CD8-positive, alpha-beta memory T cell (primary cell): ENCODE measurements at regions of chr6 and their contacts with region 1.

Region 1: DNA sequence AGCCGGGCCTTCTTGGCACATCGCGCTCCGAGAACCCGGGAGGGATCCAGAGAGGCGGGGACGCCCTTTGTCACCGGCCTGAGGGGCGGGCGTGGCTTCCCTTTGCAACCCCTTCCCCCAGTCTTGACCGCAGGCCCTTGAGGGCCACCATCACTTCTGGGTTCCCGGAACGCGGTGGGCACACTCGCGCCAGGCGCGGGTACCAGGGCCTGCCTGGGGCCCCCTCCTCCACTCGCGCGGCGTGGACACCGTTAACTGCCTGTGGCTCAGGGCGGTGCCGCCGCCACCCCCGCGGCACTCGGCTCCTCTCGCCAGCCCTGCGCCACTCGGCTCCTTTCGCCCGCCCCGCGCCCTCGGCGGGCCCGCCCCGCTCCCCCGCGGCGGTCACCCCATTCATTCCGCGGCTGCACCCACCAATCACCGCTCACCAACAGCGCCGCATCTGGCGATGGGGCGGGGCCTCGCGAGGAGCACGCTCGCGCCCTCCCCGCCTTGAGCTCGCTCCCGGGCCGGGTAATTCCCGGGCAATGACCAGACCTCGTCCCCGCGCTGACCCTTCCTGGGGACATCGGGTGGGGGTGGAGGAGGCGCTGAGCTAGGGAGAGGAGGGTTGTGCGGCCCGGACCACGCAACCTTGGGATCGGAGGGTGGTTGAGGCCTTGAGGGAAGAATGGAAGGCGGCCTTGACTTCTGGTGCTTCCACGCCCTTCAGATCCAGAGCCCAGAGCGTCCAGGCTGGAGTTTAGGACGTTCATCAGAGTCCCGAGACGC is 10.5 kb upstream of the ELOVL5 start:
- DNase-seq: peak; percentile 83 to 93 (median 88)
- H3K4me3 ChIP-seq: peak overlapping the region; percentile 75
- H3K4me3 Mint-ChIP-seq: peak overlapping the region; percentile 80 to 92 (median 90)
- H3K27ac ChIP-seq: peak overlapping the region; percentile 94
- H3K27ac Mint-ChIP-seq: peak overlapping the region; percentile 94 to 99 (median 98)
- H3K4me1 ChIP-seq: peaks cover 41% of the 10 kb centered on the region
- H3K4me1 Mint-ChIP-seq: peaks cover 40 to 51% (median 48%) of the 10 kb centered on the region in 3 donors
- H3K27me3 ChIP-seq: no peaks in the 10 kb centered on the region
- H3K27me3 Mint-ChIP-seq: peaks cover 0 to 1% of the 10 kb centered on the region in 2 donors

Region 2: DNA sequence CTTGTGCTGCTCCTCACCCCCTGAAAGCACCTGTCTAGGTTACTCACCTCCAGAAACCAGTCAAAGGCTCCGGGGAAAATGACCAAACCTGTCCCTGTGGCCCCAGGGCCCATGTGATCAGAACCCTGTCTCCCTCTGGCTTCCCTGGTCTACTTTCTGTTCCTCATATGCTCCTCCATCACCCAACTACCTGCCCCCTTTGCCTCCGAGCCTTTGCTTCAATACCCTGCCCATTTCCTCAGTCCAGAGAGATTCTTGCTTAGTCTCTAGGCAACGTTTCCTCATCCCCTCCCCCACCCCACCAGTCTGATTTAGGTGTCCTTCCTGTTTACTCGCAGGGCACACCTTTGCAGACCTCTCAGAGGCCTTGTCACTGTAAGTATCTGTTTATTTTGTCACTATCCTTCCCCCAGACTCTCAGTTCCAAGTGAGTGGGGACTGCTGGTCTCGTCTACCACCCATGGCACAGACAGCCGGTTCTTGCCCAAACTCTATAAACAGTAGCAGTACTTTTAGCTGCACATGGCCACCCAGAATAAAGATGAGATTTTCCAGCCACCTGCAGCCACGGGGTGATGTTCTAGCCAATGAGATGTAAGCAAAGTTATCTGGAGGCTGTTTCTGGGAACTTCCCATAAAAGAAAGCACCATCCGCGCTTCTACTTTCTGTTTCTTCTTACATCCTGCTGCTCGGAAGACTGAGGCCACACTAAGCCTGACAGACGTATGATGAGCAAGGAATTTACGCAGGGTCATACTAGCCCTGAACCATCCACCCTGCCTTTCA is 23.9 kb before region 1 on chr6:
- CTCF ChIA-PET with region 1: interaction called, 9 read pairs
- POLR2A ChIA-PET with region 1: interaction called, 15 read pairs
- DNase-seq: peak; percentile 53 to 87 (median 74)
- H3K4me3 ChIP-seq: peak overlapping the region; percentile 59
- H3K4me3 Mint-ChIP-seq: peak overlapping the region; percentile 83 to 95 (median 89)
- H3K27ac ChIP-seq: peak overlapping the region; percentile 84
- H3K27ac Mint-ChIP-seq: peak overlapping the region; percentile 96 to 100 (median 99)
- H3K4me1 ChIP-seq: peaks cover 87% of the 10 kb centered on the region
- H3K4me1 Mint-ChIP-seq: peaks cover 90 to 98% (median 96%) of the 10 kb centered on the region in 3 donors
- H3K27me3 ChIP-seq: no peaks in the 10 kb centered on the region
- H3K27me3 Mint-ChIP-seq: no peaks in the 10 kb centered on the region